Activated CD4-positive, alpha-beta T cell treated with anti-CD3 and anti-CD28 coated beads, Interleukin-2, amount 10 ng/mL, durations not matched to agents 24 days and 14 days (primary cell): ENCODE measurements at regions of chr6 and their contacts with region 1.

Region 1: GRCh38 chr6:108848116-108848868 is at the start of gene ARMC2:
- DNase-seq: peak; percentile 97
- H3K4me3 Mint-ChIP-seq: peak within 1 kb of the TSS; percentile 85
- H3K27ac Mint-ChIP-seq: peak within 1 kb of the TSS; percentile 74
- H3K4me1 Mint-ChIP-seq: peaks cover 19% of the 10 kb centered on the region
- H3K27me3 Mint-ChIP-seq: peaks cover 21% of the 10 kb centered on the region
- total RNA-seq, gene ARMC2: 2.7 and 3.3 TPM in 2 replicates

Region 2: GRCh38 chr6:108798670-108799353 is 49.5 kb before region 1 on chr6:
- intact Hi-C with region 1: no loop called
- DNase-seq: peak; percentile 88
- H3K4me3 Mint-ChIP-seq: peak overlapping the region; percentile 61
- H3K27ac Mint-ChIP-seq: peak overlapping the region; percentile 78
- H3K4me1 Mint-ChIP-seq: peaks cover 33% of the 10 kb centered on the region
- H3K27me3 Mint-ChIP-seq: peaks cover 6% of the 10 kb centered on the region

Region 3: DNA sequence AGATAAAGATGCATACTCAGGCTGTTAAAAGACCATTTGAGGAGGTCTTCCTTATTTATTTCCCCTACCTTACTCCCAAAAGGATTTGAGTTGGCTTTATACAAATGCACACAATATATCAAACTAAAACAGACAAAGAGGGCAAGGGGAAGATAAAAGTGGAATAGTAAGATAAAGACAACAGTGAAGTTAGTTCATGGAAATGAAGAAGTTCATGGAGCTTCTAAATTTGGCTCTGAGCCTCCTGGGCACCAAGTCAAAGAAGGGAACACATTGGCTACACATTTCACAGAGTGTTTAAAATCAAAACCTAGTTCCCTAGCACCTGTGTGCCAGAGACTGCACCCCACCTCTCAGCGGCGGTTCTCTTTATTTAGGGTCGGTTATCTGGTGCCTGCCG is 25.9 kb before region 1 on chr6:
- intact Hi-C with region 1: no loop called
- DNase-seq: no peak
- H3K4me3 Mint-ChIP-seq: no peak overlapping the region
- H3K27ac Mint-ChIP-seq: no peak overlapping the region
- H3K4me1 Mint-ChIP-seq: no peaks in the 10 kb centered on the region
- H3K27me3 Mint-ChIP-seq: peaks cover 4% of the 10 kb centered on the region

Region 4: DNA sequence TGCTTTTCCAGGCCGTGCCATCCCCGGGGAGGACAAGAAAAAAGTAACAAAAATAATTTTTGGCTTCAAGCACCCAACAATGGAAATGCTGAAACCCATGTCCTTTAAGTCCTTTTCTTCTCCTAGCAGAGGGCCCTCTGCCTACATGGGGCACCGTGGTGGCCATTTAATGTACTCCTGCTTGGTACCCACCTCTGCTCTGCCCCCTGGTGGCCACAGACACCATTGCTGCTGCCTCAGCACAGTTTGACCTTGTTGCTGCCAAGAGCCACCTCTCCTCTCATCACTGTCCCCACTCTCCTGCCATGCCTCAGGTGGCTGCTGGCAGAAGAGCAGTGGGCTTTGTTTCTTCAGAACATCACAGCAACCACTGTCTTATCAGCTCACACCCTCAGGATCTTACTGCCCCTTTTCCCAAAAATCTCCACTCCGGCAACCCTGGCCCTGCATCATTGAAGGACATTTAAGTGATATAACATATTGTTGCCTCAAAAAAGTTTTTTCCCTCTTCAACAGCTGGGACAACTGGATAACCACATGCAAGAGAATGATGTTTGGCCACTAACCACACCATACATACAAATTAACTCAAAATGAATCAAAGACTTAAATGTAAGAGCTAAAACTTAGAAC is 13.0 kb before region 1 on chr6:
- intact Hi-C with region 1: loop called (anchors 1 kb)
- DNase-seq: peak; percentile 94
- H3K4me3 Mint-ChIP-seq: no peak overlapping the region
- H3K27ac Mint-ChIP-seq: peak overlapping the region; percentile 14
- H3K4me1 Mint-ChIP-seq: peaks cover 26% of the 10 kb centered on the region
- H3K27me3 Mint-ChIP-seq: peaks cover 18% of the 10 kb centered on the region

Region 5: GRCh38 chr6:108883172-108883571 is 34.9 kb after region 1 on chr6:
- intact Hi-C with region 1: loop called (anchors 1 kb)
- DNase-seq: no peak
- H3K4me3 Mint-ChIP-seq: peak overlapping the region; percentile 24
- H3K27ac Mint-ChIP-seq: peak overlapping the region; percentile 87
- H3K4me1 Mint-ChIP-seq: peaks cover 31% of the 10 kb centered on the region
- H3K27me3 Mint-ChIP-seq: peaks cover 28% of the 10 kb centered on the region

Region 6: GRCh38 chr6:109362102-109362884 is 514.0 kb after region 1 on chr6:
- intact Hi-C with region 1: no loop called
- DNase-seq: no peak
- H3K4me3 Mint-ChIP-seq: no peak overlapping the region
- H3K27ac Mint-ChIP-seq: no peak overlapping the region
- H3K4me1 Mint-ChIP-seq: peaks cover 18% of the 10 kb centered on the region
- H3K27me3 Mint-ChIP-seq: no peaks in the 10 kb centered on the region